ENCODE measurements at regions of chr2 and their contacts with region 1.

Region 1: DNA sequence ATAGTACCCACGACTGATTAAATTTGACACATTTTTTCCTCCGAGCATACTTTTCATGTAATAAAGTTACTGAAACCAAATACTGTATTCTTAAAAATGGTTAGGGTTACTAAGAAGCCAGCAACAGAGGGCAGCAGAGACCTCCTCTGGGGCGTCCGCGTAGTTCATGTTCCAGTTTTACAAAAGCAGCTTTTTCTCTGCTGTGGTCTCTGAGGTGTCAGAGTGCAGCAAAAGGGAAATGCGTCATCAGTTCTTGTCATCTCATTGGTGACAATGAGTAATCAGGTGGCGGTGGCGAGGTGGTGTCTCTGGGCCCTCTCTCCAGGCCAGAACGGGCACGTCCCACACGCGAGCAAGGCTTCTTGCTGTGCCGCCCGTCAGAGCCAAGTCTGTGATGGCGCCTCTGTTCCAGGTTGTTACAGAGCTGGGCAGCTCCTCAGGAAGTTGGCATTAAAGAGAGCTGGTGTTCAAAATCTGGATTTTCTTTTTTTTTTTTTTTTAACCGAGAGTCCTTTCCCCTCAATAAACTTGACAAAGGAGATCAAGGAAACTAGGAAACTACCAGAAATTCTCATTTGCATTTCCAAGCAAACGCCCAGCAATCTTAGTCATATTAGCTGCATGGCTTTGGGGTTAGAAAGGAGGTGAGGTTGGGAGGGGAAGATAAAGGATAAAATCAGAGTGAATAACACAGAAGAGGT is 98.6 kb upstream of the BZW1 start:
- DNase-seq: peak; percentile 89
- H3K4me3 Mint-ChIP-seq: peak overlapping the region; percentile 69
- H3K27ac Mint-ChIP-seq: peak overlapping the region; percentile 99
- H3K4me1 Mint-ChIP-seq: peaks cover 38% of the 10 kb centered on the region
- H3K27me3 Mint-ChIP-seq: no peaks in the 10 kb centered on the region

Region 2: GRCh38 chr2:200735061-200735460 is 21.9 kb after region 1 on chr2:
- intact Hi-C with region 1: loop called (anchors 2 kb)
- DNase-seq: no peak
- H3K4me3 Mint-ChIP-seq: no peak overlapping the region
- H3K27ac Mint-ChIP-seq: no peak overlapping the region
- H3K4me1 Mint-ChIP-seq: peaks cover 20% of the 10 kb centered on the region
- H3K27me3 Mint-ChIP-seq: peaks cover 7% of the 10 kb centered on the region

Region 3: DNA sequence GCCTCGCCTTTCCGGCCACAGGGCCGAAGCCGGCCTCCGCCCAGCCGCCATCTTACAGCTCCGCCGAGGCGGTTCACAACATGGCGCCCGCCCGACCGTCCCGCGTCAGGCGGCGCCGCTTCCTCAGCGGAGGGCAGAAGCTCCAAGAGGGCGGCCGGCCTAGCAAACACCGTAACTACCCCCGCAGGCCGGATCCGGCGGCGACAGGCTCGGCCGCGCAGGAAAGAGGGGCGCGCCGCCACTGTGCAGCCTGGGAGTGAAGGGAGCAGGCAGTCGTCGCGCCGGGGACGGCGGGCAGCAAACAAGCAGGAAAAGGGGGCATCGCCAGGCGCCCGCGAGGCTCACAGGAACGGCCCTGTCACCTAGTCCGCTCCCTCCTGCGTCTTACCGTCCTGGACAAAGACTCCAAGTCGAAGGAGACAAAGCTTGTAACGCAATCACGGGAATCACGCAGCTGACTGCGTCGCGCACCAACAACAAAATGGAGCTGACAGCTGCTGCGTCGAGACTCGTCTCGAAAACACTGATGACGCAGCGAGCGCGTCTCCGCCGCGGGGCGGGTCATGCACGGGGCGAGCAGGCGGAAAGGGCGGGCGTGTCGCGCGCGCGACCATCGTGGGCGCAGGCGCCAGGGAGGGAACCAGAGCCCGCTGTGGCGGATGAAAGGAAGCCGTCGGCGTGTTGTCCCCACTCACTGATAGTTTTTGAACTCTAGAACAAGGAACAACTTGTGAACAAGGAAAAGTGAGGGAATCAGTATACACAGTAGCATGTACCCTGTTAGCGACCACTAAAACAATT is 151.2 kb after region 1 on chr2 and contains the start of gene CLK1:
- intact Hi-C with region 1: loop called (anchors 1 kb)
- DNase-seq: peak; percentile 91
- H3K4me3 Mint-ChIP-seq: peak within 1 kb of the TSS; percentile 93
- H3K27ac Mint-ChIP-seq: peak within 1 kb of the TSS; percentile 94
- H3K4me1 Mint-ChIP-seq: peaks cover 32% of the 10 kb centered on the region
- H3K27me3 Mint-ChIP-seq: no peaks in the 10 kb centered on the region
- total RNA-seq, gene CLK1: 114 and 122 TPM in 2 replicates

Region 4: GRCh38 chr2:201118121-201118960 is 405.2 kb after region 1 on chr2:
- intact Hi-C with region 1: loop called (anchors 1 kb)
- DNase-seq: peak; percentile 76
- H3K4me3 Mint-ChIP-seq: peak overlapping the region; percentile 94
- H3K27ac Mint-ChIP-seq: peak overlapping the region; percentile 95
- H3K4me1 Mint-ChIP-seq: peaks cover 42% of the 10 kb centered on the region
- H3K27me3 Mint-ChIP-seq: no peaks in the 10 kb centered on the region

Region 5: DNA sequence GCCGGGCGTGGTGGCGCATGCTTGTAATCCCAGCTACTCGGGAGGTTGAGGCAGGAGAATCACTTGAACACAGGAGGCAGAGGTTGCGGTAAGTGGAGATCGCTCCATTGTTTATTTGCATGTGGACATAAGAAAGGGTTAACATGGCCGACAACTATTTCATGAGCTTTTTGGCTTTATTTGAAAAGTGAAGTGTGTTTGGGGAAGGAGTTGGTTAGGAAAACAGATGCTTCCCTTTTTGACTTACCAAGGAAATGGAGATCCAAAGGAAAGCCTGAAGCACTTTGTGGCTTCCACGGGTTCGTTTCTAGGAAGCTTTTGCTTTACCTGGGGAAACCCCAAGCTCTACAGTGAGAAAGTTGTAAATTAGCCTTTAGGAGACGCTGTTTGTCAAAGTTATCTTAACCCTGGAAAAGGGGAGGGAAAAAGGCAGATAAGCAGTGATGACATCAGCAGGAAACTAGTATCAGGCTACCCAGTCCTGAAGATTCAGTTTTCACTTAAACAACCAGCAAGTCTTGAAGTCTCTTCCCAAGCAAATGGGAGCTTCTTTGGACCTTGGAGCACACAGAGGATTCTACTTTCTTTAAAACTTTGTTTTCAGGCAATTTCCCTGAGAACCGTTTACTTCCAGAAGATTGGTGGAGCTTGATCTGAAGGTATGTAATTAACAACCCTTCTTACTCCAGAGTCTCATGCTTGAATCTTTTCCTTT is 469.7 kb after region 1 on chr2 and contains the start of gene CASP10:
- intact Hi-C with region 1: loop called (anchors 5 kb)
- DNase-seq: peak; percentile 32
- H3K4me3 Mint-ChIP-seq: peak within 1 kb of the TSS; percentile 96
- H3K27ac Mint-ChIP-seq: peak within 1 kb of the TSS; percentile 93
- H3K4me1 Mint-ChIP-seq: peaks cover 43% of the 10 kb centered on the region
- H3K27me3 Mint-ChIP-seq: no peaks in the 10 kb centered on the region
- total RNA-seq, gene CASP10: 14.3 and 17.3 TPM in 2 replicates

Measured in activated T-helper 2 cell treated with anti-CD3 and anti-CD28 coated beads, Interferon-gamma antibody, Interleukin-2, Interleukin-4, amounts not matched to agents 10 μg/mL and 5 μg/mL and 100 μg/mL, durations not matched to agents 14 hours and 24 hours and 36 hours (primary cell).